ENCODE measurements at regions of chr9 and their contacts with region 1.

Region 1: GRCh38 chr9:97501177-97501971 is at the start of gene TMOD1:
- DNase-seq: peak; percentile 39 to 76
- H3K4me3 ChIP-seq: peak within 1 kb of the TSS; percentile 93
- H3K27ac ChIP-seq: no peak within 1 kb of the TSS
- H3K4me1 ChIP-seq: peaks cover 4% of the 10 kb centered on the region; the same call in 1 of the 2 replicates
- H3K27me3 ChIP-seq: no peaks in the 10 kb centered on the region
- CTCF ChIP-seq: no peak
- total RNA-seq, gene TMOD1: 6.8 and 7.1 TPM in 2 replicates

Region 2: DNA sequence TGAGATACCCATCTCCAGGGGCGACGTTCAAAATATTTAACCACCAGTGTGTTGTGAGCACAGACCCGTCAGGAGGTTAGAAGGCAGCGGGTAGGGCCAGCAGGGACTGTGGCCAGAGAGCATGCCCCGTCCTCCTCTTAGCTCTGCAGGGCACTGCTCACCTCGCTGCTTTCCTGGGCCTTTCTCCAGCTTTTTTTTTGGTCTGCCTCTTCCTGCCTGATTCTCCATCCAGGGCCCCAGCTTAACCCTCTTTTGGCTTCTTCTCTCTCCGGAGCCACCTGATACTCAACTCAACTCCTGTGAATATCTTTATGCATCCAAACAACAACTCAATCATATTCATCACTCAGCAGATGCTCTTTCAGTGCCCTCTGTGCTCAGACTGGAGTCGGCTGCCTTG is 44.1 kb after region 1 on chr9:
- CTCF ChIA-PET with region 1: no interaction called
- POLR2A ChIA-PET with region 1: no interaction called
- intact Hi-C with region 1: loop called (anchors 5 kb)
- DNase-seq: no peak
- H3K4me3 ChIP-seq: no peak overlapping the region
- H3K27ac ChIP-seq: no peak overlapping the region
- H3K4me1 ChIP-seq: peaks cover 20% of the 10 kb centered on the region
- H3K27me3 ChIP-seq: no peaks in the 10 kb centered on the region
- CTCF ChIP-seq: no peak

Region 3: DNA sequence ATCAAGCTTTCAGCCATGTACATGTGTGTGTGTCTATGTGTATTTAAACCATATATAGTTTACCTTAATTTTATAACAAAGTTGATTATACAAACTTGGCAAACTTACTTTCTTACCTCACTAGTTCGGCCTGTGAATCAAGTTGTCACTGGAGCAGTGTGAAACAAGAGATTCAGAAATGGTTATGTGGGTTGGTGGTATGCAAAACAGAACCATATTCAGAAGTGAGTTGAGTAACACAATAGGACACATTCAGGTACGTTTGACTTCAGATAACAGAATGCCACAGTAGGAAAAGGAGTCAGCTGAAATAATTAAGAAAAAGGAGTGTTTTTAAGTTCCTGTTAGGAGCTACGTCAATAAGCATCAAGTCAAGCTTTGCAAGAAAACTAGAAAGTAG is 174.3 kb after region 1 on chr9:
- CTCF ChIA-PET with region 1: no interaction called
- POLR2A ChIA-PET with region 1: no interaction called
- intact Hi-C with region 1: no loop called
- DNase-seq: no peak
- H3K4me3 ChIP-seq: no peak overlapping the region
- H3K27ac ChIP-seq: no peak overlapping the region
- H3K4me1 ChIP-seq: no peaks in the 10 kb centered on the region
- H3K27me3 ChIP-seq: no peaks in the 10 kb centered on the region
- CTCF ChIP-seq: no peak

Measured in PC-9 (cell line).